Activated CD4-positive, alpha-beta T cell treated with anti-CD3 and anti-CD28 coated beads, Interleukin-2, amount 10 ng/mL, durations not matched to agents 24 days and 14 days (primary cell): ENCODE measurements at regions of chr14 and their contacts with region 1.

Region 1: DNA sequence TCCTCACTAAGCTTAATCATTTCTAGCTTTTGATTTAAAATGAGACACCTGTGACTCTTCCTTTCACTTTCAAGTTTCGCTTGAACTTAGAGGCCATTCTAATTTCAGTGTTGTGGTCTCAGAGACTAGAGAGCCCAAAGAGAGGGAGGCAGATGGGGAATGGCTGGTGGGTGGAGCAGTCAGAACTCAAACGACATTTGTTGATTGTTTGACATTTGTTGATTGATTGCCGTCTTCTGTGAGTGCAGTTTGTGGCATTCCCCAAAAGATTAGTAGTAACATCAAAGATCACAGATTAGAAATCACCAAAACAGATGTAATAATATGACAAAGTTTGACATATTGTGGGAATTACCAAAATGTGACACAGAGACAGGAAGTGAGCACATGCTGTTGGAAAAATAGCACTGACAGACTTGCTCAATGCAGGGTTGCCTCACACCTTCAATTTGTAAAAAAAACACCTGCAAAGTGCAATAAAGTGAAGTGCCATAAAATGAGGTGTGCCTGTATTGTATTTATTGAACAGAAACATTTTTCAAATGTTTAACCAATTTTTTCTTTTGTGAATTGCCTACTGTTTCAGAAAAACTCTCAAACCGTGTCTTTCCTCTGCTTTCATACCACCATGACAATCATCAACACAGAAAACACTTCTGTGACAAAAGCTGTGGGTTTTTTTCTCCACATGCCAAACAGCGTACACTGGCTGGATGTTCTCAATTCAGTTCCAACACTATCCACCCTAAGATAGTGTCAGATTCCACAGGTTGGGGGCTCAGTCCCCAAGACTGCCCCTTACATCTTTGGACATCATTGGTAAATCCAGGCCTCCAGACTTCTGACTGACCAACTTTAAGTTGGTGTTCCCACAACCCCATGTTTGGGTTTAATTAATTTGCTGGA is 376.3 kb upstream of the RGS6 start:
- DNase-seq: peak; percentile 91
- H3K4me3 Mint-ChIP-seq: peak overlapping the region; percentile 59
- H3K27ac Mint-ChIP-seq: peak overlapping the region; percentile 92
- H3K4me1 Mint-ChIP-seq: peaks cover 61% of the 10 kb centered on the region
- H3K27me3 Mint-ChIP-seq: no peaks in the 10 kb centered on the region

Region 2: GRCh38 chr14:70887207-70887681 is 668.7 kb before region 1 on chr14:
- intact Hi-C with region 1: loop called (anchors 10 kb)
- DNase-seq: no peak
- H3K4me3 Mint-ChIP-seq: peak overlapping the region; percentile 76
- H3K27ac Mint-ChIP-seq: peak overlapping the region; percentile 93
- H3K4me1 Mint-ChIP-seq: peaks cover 80% of the 10 kb centered on the region
- H3K27me3 Mint-ChIP-seq: no peaks in the 10 kb centered on the region

Region 3: DNA sequence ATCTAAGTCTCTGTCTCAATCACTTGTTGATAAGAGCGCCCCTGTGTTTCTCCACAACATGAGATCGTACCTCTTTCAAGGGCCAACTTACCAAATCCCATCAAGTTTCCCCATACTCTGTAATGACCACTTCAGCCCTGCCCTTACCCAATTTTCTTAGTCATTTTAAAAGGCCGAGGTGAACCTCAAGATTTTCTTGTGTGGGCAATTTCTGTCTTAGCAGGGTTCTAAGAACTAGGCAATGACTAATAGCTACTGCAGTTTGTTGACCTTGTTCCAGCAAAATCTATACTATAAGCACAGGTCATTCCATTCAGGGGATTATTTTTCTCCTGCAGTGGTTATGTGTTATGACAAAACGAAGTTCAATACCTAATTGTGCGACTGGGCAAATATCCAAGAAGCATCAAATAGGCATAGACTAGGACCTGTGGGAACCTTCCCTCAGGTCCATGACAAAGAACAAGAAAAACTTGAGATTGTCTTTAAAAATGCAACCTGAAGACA is 288.8 kb before region 1 on chr14:
- intact Hi-C with region 1: loop called (anchors 1 kb)
- DNase-seq: peak; percentile 67
- H3K4me3 Mint-ChIP-seq: peak overlapping the region; percentile 36
- H3K27ac Mint-ChIP-seq: peak overlapping the region; percentile 63
- H3K4me1 Mint-ChIP-seq: peaks cover 32% of the 10 kb centered on the region
- H3K27me3 Mint-ChIP-seq: peaks cover 9% of the 10 kb centered on the region

Region 4: DNA sequence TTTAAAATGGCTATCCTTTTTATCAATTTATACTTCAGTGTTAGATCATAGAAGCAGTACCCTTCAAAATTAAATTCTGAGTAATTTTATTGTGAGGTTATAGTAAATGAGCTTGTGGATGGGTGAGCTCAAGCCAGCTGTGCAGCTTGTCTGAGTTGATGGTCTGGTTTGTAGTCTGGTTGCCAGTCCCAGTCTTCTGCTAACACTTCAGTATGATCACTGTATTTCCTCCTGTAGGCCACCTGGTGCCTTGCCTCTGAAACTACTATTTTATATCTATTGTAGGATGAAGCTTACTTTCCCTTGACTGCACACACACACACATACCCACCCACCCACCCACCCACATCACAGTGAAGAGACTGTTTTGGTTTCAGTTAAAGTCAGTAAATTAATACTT is 152.3 kb before region 1 on chr14:
- intact Hi-C with region 1: loop called (anchors 1 kb)
- DNase-seq: peak; percentile 81
- H3K4me3 Mint-ChIP-seq: no peak overlapping the region
- H3K27ac Mint-ChIP-seq: peak overlapping the region; percentile 36
- H3K4me1 Mint-ChIP-seq: peaks cover 40% of the 10 kb centered on the region
- H3K27me3 Mint-ChIP-seq: no peaks in the 10 kb centered on the region

Region 5: GRCh38 chr14:71497645-71498086 is 58.2 kb before region 1 on chr14:
- intact Hi-C with region 1: loop called (anchors 1 kb)
- DNase-seq: no peak
- H3K4me3 Mint-ChIP-seq: peak overlapping the region; percentile 20
- H3K27ac Mint-ChIP-seq: peak overlapping the region; percentile 37
- H3K4me1 Mint-ChIP-seq: peaks cover 20% of the 10 kb centered on the region
- H3K27me3 Mint-ChIP-seq: no peaks in the 10 kb centered on the region

Region 6: DNA sequence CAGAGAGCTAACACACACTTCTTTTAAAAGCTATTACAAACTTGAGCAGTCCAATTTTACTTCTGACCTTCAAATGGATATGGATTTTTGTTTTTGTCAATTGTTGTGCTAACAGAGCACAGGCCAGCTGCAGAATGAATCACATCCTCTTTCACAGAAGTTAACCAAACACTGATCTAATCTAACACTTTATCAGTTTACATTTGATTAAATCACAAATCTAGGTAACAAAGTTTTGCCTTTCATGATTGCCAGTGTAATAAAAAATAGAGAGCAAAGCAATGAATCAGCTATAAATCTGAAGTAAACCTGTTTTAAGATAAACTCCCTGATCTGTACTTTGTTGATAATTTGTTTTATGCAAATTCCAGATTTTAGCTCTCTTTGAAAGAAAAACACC is 103.3 kb after region 1 on chr14:
- intact Hi-C with region 1: loop called (anchors 2 kb)
- DNase-seq: no peak
- H3K4me3 Mint-ChIP-seq: peak overlapping the region; percentile 40
- H3K27ac Mint-ChIP-seq: peak overlapping the region; percentile 61
- H3K4me1 Mint-ChIP-seq: peaks cover 16% of the 10 kb centered on the region
- H3K27me3 Mint-ChIP-seq: no peaks in the 10 kb centered on the region

Region 7: GRCh38 chr14:71682337-71682736 is 126.4 kb after region 1 on chr14:
- intact Hi-C with region 1: no loop called
- DNase-seq: no peak
- H3K4me3 Mint-ChIP-seq: no peak overlapping the region
- H3K27ac Mint-ChIP-seq: no peak overlapping the region
- H3K4me1 Mint-ChIP-seq: peaks cover 6% of the 10 kb centered on the region
- H3K27me3 Mint-ChIP-seq: no peaks in the 10 kb centered on the region